Testis (tissue), 5 donors: ENCODE measurements at regions of chr15 and their contacts with region 1.

Region 1: GRCh38 chr15:29870495-29871151 is 48.4 kb upstream of the TJP1 start:
- DNase-seq: peak; percentile 82
- H3K4me3 ChIP-seq: no peak overlapping the region
- H3K27ac ChIP-seq: peak overlapping the region; percentile 73 to 84
- H3K4me1 ChIP-seq: peaks cover 51% of the 10 kb centered on the region
- H3K27me3 ChIP-seq: no peaks in the 10 kb centered on the region
- CTCF ChIP-seq: no peak
- POLR2A ChIP-seq: no peak

Region 2: DNA sequence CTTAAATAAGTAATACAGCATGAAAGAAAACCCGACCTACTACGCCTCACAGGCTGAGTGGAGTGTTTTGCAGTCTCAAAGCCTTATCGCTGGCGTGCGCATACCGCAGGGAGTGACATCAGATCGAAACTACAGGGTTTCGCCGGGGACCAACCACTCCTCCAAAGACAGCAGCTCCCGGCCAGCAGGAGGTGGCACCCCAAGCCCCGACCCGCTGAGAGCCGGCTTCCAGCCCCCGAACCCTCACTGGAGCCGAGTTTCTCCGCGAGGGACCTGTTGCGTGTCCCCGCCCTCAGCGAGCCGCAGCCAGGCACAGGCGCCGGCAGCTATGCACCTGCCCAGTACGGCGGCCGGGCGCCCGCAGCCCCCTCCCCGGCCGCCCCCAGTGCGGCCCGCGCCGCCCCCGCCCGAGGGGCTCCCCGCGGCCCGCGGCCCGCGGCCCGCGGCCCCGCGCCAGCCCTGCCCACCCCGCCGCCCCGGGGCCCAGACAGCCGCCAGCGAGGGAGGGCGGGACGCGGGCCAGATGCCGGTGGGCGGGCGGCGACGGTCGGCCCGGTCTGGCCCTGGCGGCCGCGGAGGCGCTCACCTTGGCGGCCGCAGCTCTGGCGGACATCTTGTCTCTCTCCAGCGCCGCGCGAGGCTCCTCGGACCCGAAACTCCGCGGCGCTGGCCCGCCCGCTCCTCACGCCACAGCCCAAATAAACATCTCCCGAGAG is 49.0 kb before region 1 on chr15:
- intact Hi-C with region 1: loop called (anchors 5 kb)
- DNase-seq: peak; percentile 91
- H3K4me3 ChIP-seq: peak overlapping the region; percentile 88 to 98
- H3K27ac ChIP-seq: peak overlapping the region; percentile 97 to 98
- H3K4me1 ChIP-seq: peaks cover 9% of the 10 kb centered on the region
- H3K27me3 ChIP-seq: no peaks in the 10 kb centered on the region
- CTCF ChIP-seq: no peak
- POLR2A ChIP-seq: no peak

Region 3: GRCh38 chr15:29913528-29914135 is 43.0 kb after region 1 on chr15:
- intact Hi-C with region 1: no loop called
- DNase-seq: no peak
- H3K4me3 ChIP-seq: no peak overlapping the region
- H3K27ac ChIP-seq: peak overlapping the region; percentile 27 to 54
- H3K4me1 ChIP-seq: peaks cover 11% of the 10 kb centered on the region
- H3K27me3 ChIP-seq: no peaks in the 10 kb centered on the region
- CTCF ChIP-seq: no peak
- POLR2A ChIP-seq: no peak

Region 4: DNA sequence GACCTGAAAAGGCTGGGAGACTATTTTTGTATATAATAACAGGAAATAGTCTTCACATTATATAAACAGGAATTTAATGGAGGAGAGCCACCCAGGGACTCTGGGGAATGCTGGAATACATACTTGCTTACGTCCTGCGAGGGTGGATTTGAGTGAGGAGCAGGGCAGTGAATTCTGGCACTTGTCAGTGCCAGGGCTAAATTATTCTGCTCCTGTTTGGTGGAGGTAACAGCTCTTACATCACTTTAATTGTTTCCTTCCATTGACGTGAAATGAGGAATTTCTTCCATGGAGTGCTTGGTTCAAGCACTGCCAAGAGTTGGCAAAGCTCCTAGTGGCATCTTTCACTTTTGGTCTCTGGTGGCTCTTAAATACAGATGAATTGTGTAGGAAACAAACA is 118.1 kb after region 1 on chr15:
- intact Hi-C with region 1: no loop called
- DNase-seq: no peak
- H3K4me3 ChIP-seq: no peak overlapping the region
- H3K27ac ChIP-seq: no peak overlapping the region
- H3K4me1 ChIP-seq: no peaks in the 10 kb centered on the region
- H3K27me3 ChIP-seq: no peaks in the 10 kb centered on the region
- CTCF ChIP-seq: no peak
- POLR2A ChIP-seq: no peak